Posterior cingulate gyrus (tissue), 11 donors: ENCODE measurements at regions of chr16 and their contacts with region 1.

Region 1: DNA sequence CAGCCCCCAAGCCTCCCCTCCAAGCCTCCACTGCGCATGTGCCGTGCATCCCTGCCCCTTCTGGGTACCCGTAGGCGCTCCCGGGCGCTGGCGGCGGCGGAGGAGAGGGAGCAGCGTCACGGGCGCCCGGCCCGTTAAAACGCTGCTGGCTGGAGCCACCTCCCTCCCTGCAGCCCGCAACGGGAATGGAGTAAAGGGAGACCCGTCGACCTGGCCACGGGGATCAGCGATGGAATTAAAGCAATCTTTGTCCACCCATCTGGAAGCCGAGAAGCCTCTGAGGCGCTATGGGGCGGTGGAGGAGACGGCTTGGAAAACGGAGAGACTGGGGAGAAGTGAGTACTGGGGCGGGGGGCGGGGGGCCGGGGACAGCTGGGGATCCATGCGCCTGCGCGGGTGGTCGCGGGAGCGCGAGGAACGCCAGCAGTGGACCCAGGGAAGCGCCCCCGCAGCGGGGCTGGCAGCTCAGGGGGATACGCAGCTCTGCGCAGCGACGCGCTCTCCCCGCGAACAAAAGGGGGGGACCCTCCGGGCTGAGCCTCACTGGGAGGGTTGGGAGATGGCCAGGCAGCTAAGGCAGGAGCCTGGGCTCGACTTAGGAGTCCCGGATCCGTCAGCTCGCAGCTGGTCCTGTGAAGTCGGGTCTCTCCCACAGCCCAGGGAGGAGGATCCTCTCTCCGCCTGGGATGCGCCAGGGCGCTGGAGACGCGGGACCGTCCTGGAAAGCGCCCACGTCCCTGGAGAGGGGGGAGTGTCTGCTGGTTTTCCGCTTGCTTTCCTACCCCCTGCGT is at the start of gene BMERB1:
- DNase-seq: peak; percentile 78 to 97 (median 84)

Region 2: DNA sequence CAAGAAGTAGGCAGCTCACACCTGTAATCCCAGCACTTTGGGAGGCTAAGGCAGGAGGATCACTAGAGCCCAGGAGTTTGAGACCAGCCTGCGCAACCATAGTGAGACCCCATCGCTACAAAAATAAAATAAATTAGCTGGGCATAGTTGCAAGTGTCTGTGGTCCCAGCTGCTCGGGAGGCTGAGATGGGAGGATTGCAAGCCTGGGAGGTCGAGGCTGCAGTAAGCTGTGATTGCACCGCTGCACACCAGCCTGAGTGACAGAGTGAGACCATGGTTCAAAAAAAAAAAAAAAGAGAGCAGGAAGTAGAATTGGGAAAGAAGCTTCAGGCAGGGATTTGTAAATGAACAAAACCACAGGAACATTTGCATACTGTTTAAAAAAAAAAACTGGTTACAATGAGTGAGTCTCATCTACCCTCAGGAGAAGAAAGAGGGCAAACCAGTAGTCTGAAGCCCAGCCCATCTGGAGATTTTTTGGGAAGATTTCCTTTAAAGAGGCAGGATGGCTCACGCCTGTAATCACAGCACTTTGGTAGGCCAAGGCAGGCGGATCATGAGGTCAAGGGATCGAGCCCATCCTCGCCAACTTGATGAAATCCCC is 31.1 kb before region 1 on chr16:
- intact Hi-C with region 1: no loop called
- DNase-seq: peak in 1 of 10 donors; percentile 12

Region 3: GRCh38 chr16:15485175-15485574 is 50.6 kb after region 1 on chr16:
- intact Hi-C with region 1: no loop called
- DNase-seq: no peak

Region 4: DNA sequence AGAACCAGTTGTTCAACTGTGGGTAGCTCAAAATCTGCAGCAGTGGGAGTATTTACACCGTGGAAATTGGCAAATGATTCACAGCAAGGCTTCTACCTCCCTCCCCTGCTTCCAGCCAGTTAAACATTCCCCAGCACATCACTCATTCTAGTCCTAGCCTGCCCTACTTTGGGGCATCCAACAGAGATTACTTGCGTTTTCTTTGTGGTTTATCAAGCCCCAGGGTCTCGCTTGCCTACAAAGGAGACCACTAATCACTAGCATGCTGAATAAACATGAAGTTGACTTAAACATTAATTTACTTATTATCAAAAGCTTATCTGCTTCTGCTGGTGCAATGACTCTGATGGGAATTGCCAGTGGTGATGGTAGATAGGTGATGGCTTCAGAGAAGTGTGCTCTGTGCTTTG is 113.9 kb after region 1 on chr16:
- intact Hi-C with region 1: loop called (anchors 2 kb)
- DNase-seq: no peak

Region 5: GRCh38 chr16:15643048-15643945 is 208.7 kb after region 1 on chr16 and contains the start of gene MARF1:
- intact Hi-C with region 1: loop called (anchors 5 kb)
- DNase-seq: peak; percentile 93 to 99 (median 97)